BJ (cell line): ENCODE measurements at regions of chr2 and their contacts with region 1.

Region 1: GRCh38 chr2:236352761-236353593 is 88.8 kb upstream of the ASB18 start:
- DNase-seq: no peak
- H3K4me3 ChIP-seq: no peak overlapping the region
- H3K27me3 ChIP-seq: no peaks in the 10 kb centered on the region; the same call in 1 of the 2 replicates
- CTCF ChIP-seq: peak; percentile 78

Region 2: GRCh38 chr2:237026981-237027711 is 674.2 kb after region 1 on chr2:
- CTCF ChIA-PET with region 1: interaction called, 47 read pairs
- POLR2A ChIA-PET with region 1: no interaction called
- DNase-seq: no peak
- H3K4me3 ChIP-seq: no peak overlapping the region
- H3K27me3 ChIP-seq: no peaks in the 10 kb centered on the region; the same call in 1 of the 2 replicates
- CTCF ChIP-seq: peak; percentile 90

Region 3: GRCh38 chr2:237060534-237061312 is 707.7 kb after region 1 on chr2:
- CTCF ChIA-PET with region 1: interaction called, 91 read pairs
- POLR2A ChIA-PET with region 1: no interaction called
- DNase-seq: peak; percentile 5
- H3K4me3 ChIP-seq: no peak overlapping the region
- H3K27me3 ChIP-seq: no peaks in the 10 kb centered on the region; the same call in 1 of the 2 replicates
- CTCF ChIP-seq: peak; percentile 72

Region 4: DNA sequence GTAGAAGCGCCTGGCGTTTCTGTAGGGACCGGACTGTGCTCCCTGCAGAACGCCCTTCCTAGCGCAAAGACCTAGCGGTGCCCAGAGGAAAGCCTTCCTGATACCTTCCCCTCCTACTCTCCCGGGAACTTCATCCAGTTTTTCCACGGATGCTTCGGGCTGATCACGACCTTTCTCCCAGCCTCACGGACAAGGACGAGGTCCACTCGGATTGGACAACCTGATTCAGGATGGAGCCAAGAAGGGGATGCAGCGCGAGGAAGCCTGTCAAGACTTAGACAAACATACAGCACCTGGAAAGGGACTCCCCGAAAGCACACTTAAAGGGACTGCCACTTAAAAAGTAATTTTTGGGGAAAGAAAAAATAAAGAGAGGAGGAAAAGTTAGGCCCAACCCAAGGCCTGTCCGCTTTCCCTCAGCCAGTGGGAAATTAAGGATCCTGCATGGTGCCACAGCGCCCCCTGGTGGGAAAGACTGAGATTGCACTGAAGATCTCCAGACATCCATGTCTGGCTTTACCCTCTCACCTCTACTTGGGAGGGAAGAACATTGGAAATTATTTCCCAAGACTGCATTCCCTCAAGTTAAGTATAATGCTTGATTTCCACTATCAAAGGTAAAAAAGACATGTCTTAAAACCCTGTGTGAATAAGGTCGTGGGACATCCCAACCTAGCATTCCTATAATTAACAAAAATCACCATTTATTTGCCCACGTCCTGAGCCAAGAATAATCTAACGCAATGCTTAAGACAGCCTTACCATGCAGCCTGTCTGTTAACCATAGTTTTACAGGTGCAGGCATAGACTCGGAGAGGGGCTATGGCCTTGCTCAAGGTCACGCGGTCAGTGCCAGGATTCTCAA is 719.3 kb after region 1 on chr2:
- CTCF ChIA-PET with region 1: interaction called, 23 read pairs
- POLR2A ChIA-PET with region 1: no interaction called
- DNase-seq: no peak
- H3K4me3 ChIP-seq: no peak overlapping the region
- H3K27me3 ChIP-seq: no peaks in the 10 kb centered on the region
- CTCF ChIP-seq: peak; percentile 96